IMR-90 (cell line): ENCODE measurements at regions of chr6 and their contacts with region 1.

Region 1: GRCh38 chr6:125631165-125631564 is 118.3 kb upstream of the HEY2 start:
- DNase-seq: no peak
- ATAC-seq: no peak
- H3K4me3 ChIP-seq: no peak overlapping the region
- H3K27ac ChIP-seq: no peak overlapping the region
- H3K4me1 ChIP-seq: no peaks in the 10 kb centered on the region
- H3K27me3 ChIP-seq: no peaks in the 10 kb centered on the region
- CTCF ChIP-seq: no peak
- POLR2A ChIP-seq: no peak
- RAD21 ChIP-seq: no peak

Region 2: GRCh38 chr6:125406741-125407140 is 224.4 kb before region 1 on chr6:
- CTCF ChIA-PET with region 1: no interaction called
- POLR2A ChIA-PET with region 1: no interaction called
- dilution Hi-C with region 1: no loop called
- in situ Hi-C with region 1: no loop called
- intact Hi-C with region 1: no loop called
- DNase-seq: no peak
- ATAC-seq: no peak
- H3K4me3 ChIP-seq: no peak overlapping the region
- H3K27ac ChIP-seq: no peak overlapping the region
- H3K4me1 ChIP-seq: no peaks in the 10 kb centered on the region
- H3K27me3 ChIP-seq: no peaks in the 10 kb centered on the region
- CTCF ChIP-seq: no peak
- POLR2A ChIP-seq: no peak
- RAD21 ChIP-seq: no peak

Region 3: DNA sequence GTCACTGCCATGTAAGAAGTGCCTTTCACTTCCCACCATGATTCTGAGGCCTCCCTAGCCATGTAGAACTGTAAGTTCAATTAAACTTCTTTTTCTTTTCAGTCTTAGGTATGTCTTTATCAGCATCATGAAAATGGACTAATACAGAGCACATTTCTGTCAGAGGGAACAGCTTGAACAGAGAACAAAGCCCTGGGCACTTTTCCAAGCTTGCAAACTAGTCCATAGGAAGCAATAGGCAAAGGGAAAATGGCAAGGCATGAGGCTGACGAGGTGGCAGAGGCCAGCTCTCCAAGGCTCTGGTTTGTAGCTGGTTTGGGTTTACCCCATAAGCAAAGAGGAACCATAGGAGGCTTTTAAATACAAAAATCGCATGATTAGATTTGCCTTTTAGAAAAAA is 144.3 kb before region 1 on chr6:
- CTCF ChIA-PET with region 1: no interaction called
- POLR2A ChIA-PET with region 1: no interaction called
- dilution Hi-C with region 1: no loop called
- in situ Hi-C with region 1: no loop called
- intact Hi-C with region 1: no loop called
- DNase-seq: no peak
- ATAC-seq: no peak
- H3K4me3 ChIP-seq: no peak overlapping the region
- H3K27ac ChIP-seq: no peak overlapping the region
- H3K4me1 ChIP-seq: no peaks in the 10 kb centered on the region
- H3K27me3 ChIP-seq: no peaks in the 10 kb centered on the region; the same call in 1 of the 2 replicates
- CTCF ChIP-seq: no peak
- POLR2A ChIP-seq: no peak
- RAD21 ChIP-seq: no peak

Region 4: GRCh38 chr6:126753606-126754005 is 1122.4 kb after region 1 on chr6:
- CTCF ChIA-PET with region 1: no interaction called
- POLR2A ChIA-PET with region 1: no interaction called
- dilution Hi-C with region 1: no loop called
- in situ Hi-C with region 1: no loop called
- intact Hi-C with region 1: loop called (anchors 5 kb)
- DNase-seq: no peak
- ATAC-seq: no peak
- H3K4me3 ChIP-seq: no peak overlapping the region
- H3K27ac ChIP-seq: no peak overlapping the region
- H3K4me1 ChIP-seq: no peaks in the 10 kb centered on the region
- H3K27me3 ChIP-seq: no peaks in the 10 kb centered on the region
- CTCF ChIP-seq: no peak
- POLR2A ChIP-seq: no peak
- RAD21 ChIP-seq: no peak